ENCODE measurements at regions of chr1 and their contacts with region 1.

Region 1: GRCh38 chr1:67489643-67490042 is 59.4 kb upstream of the SERBP1 start:
- DNase-seq: no peak
- H3K4me3 ChIP-seq: no peak overlapping the region
- H3K27me3 ChIP-seq: peaks cover 3% of the 10 kb centered on the region; the same call in 1 of the 2 replicates
- CTCF ChIP-seq: peak; percentile 16; the same call in 1 of the 2 replicates

Region 2: GRCh38 chr1:67347688-67348472 is 141.8 kb before region 1 on chr1:
- CTCF ChIA-PET with region 1: interaction called, 75 read pairs
- POLR2A ChIA-PET with region 1: no interaction called
- DNase-seq: peak; percentile 61
- H3K4me3 ChIP-seq: no peak overlapping the region
- H3K27me3 ChIP-seq: no peaks in the 10 kb centered on the region
- CTCF ChIP-seq: peak; percentile 84

Region 3: GRCh38 chr1:67575861-67576260 is 86.2 kb after region 1 on chr1:
- CTCF ChIA-PET with region 1: no interaction called
- POLR2A ChIA-PET with region 1: no interaction called
- DNase-seq: peak; percentile 58
- H3K4me3 ChIP-seq: no peak overlapping the region
- H3K27me3 ChIP-seq: no peaks in the 10 kb centered on the region
- CTCF ChIP-seq: no peak

Measured in BJ (cell line).